GM23248 (cell line): ENCODE measurements at regions of chr15 and their contacts with region 1.

Region 1: DNA sequence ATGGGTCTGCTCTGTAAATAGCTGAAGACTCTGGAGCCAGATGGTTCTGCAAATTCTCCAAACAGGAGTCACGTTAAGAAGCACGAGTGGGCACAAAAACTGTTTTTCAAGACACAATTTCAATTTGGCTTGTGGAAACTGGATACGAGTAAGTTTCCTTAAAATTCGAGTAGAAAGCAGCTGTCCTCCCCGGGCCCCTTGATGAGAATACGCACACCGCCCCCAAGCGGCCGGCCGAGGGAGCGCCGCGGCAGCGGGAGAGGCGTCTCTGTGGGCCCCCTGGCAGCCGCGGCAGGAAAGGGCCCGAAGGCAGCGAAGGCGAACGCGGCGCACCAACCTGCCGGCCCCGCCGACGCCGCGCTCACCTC is 778 bp upstream of the THBS1 start:
- DNase-seq: peak; percentile 96
- H3K4me3 ChIP-seq: peak overlapping the region; percentile 74
- H3K27ac ChIP-seq: peak overlapping the region; percentile 95
- H3K4me1 ChIP-seq: peaks cover 16% of the 10 kb centered on the region
- H3K27me3 ChIP-seq: no peaks in the 10 kb centered on the region

Region 2: GRCh38 chr15:38699633-38700230 is 880.4 kb before region 1 on chr15:
- in situ Hi-C with region 1: loop called (anchors 10 kb)
- DNase-seq: peak; percentile 73
- H3K4me3 ChIP-seq: no peak overlapping the region
- H3K27ac ChIP-seq: no peak overlapping the region
- H3K4me1 ChIP-seq: 0 out of 2 replicates have a peak, but pooled peaks cover 6% of the 10 kb centered on the region
- H3K27me3 ChIP-seq: no peaks in the 10 kb centered on the region

Region 3: GRCh38 chr15:39171944-39172368 is 408.1 kb before region 1 on chr15:
- in situ Hi-C with region 1: loop called (anchors 5 kb)
- DNase-seq: peak; percentile 96
- H3K4me3 ChIP-seq: no peak overlapping the region
- H3K27ac ChIP-seq: peak overlapping the region; percentile 83
- H3K4me1 ChIP-seq: peaks cover 27% of the 10 kb centered on the region
- H3K27me3 ChIP-seq: no peaks in the 10 kb centered on the region

Region 4: GRCh38 chr15:39465843-39466749 is 114.0 kb before region 1 on chr15:
- in situ Hi-C with region 1: loop called (anchors 10 kb)
- DNase-seq: peak; percentile 45
- H3K4me3 ChIP-seq: no peak overlapping the region
- H3K27ac ChIP-seq: peak overlapping the region; percentile 72
- H3K4me1 ChIP-seq: peaks cover 31% of the 10 kb centered on the region
- H3K27me3 ChIP-seq: no peaks in the 10 kb centered on the region

Region 5: GRCh38 chr15:39526206-39526605 is 53.9 kb before region 1 on chr15:
- in situ Hi-C with region 1: no loop called
- DNase-seq: no peak
- H3K4me3 ChIP-seq: no peak overlapping the region
- H3K27ac ChIP-seq: no peak overlapping the region
- H3K4me1 ChIP-seq: no peaks in the 10 kb centered on the region
- H3K27me3 ChIP-seq: no peaks in the 10 kb centered on the region

Region 6: GRCh38 chr15:39645138-39645975 is 65.3 kb after region 1 on chr15:
- in situ Hi-C with region 1: no loop called
- DNase-seq: no peak
- H3K4me3 ChIP-seq: no peak overlapping the region
- H3K27ac ChIP-seq: no peak overlapping the region
- H3K4me1 ChIP-seq: peaks cover 39% of the 10 kb centered on the region
- H3K27me3 ChIP-seq: no peaks in the 10 kb centered on the region